GM12878 (cell line): ENCODE measurements at regions of chr12 and their contacts with region 1.

Region 1: GRCh38 chr12:122123051-122123760 is 44.6 kb downstream of the MLXIP start:
- DNase-seq: no peak
- ATAC-seq: peak; percentile 82
- H3K4me3 ChIP-seq: no peak overlapping the region
- H3K27ac ChIP-seq: no peak overlapping the region
- H3K4me1 ChIP-seq: no peaks in the 10 kb centered on the region; the same call in 1 of the 2 replicates
- H3K27me3 ChIP-seq: no peaks in the 10 kb centered on the region
- CTCF ChIP-seq: peak; percentile 59 to 81 (median 66)
- EP300 ChIP-seq: no peak
- POLR2A ChIP-seq: no peak
- RAD21 ChIP-seq: peak; percentile 87

Region 2: GRCh38 chr12:121917979-121918678 is 205.1 kb before region 1 on chr12 and contains the start of gene CFAP251:
- CTCF ChIA-PET with region 1: interaction called, 13 read pairs
- POLR2A ChIA-PET with region 1: no interaction called
- RAD21 ChIA-PET with region 1: interaction called, 11 read pairs
- SMC1A ChIA-PET with region 1: interaction called, 6 read pairs
- in situ Hi-C with region 1: no loop called
- intact Hi-C with region 1: loop called (anchors 5 kb)
- DNase-seq: peak; percentile 50
- ATAC-seq: peak; percentile 100
- H3K4me3 ChIP-seq: peak within 1 kb of the TSS; percentile 57
- H3K27ac ChIP-seq: peak within 1 kb of the TSS; percentile 13; the same call in 1 of the 2 replicates
- H3K4me1 ChIP-seq: peaks cover 8% of the 10 kb centered on the region; the same call in 1 of the 2 replicates
- H3K27me3 ChIP-seq: no peaks in the 10 kb centered on the region
- CTCF ChIP-seq: peak; percentile 60 to 79 (median 73)
- EP300 ChIP-seq: no peak; a peak in 1 of 4 replicates
- POLR2A ChIP-seq: peak; percentile 67
- RAD21 ChIP-seq: peak; percentile 48
- polyA plus RNA-seq, gene CFAP251: 0.27 to 0.42 TPM

Region 3: GRCh38 chr12:122051231-122051876 is 71.9 kb before region 1 on chr12:
- CTCF ChIA-PET with region 1: interaction called, 86 read pairs
- POLR2A ChIA-PET with region 1: no interaction called
- RAD21 ChIA-PET with region 1: interaction called, 32 read pairs
- SMC1A ChIA-PET with region 1: interaction called, 33 read pairs
- in situ Hi-C with region 1: loop called (anchors 5 kb)
- intact Hi-C with region 1: loop called (anchors 1 kb)
- DNase-seq: no peak
- ATAC-seq: no peak
- H3K4me3 ChIP-seq: no peak overlapping the region
- H3K27ac ChIP-seq: no peak overlapping the region
- H3K4me1 ChIP-seq: no peaks in the 10 kb centered on the region
- H3K27me3 ChIP-seq: no peaks in the 10 kb centered on the region
- CTCF ChIP-seq: no peak
- EP300 ChIP-seq: no peak
- POLR2A ChIP-seq: no peak
- RAD21 ChIP-seq: no peak

Region 4: DNA sequence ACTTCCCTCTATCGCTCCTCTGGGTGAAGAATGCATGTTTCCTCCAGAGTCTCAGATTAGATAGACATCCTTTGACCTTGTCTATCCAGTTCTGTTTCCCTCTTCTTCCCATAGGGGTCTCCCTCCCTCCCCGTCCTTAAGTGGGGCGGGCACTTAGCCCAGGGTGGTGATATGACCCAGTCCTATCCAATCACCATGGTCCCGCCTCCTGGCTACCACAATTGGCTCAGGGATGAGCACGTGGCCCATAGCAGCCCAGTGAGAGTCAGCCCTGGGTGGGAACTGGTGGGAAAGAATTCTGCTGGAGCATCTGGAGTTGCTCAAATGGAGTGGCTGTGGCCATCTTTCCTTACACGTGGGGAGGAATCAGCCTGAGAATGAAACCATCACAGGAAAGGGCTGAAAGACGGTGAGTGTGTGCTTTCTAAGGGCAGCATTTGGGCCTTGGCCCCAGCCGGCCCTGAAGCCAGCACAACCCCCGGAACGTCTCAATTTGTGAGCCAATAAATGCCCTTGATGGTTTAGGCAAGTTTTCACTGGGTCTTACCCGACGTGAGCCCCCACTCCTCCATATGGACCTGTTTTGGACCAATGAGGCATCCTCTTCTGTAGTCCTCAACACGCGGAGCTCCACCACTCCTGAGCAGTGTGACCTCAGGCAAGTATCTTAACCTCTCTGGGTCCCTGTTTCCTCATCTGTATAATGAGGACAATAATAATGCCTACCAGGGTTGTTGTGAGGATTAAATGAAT is 59.0 kb before region 1 on chr12:
- CTCF ChIA-PET with region 1: interaction called, 15 read pairs
- POLR2A ChIA-PET with region 1: no interaction called
- RAD21 ChIA-PET with region 1: interaction called, 5 read pairs
- SMC1A ChIA-PET with region 1: interaction called, 3 read pairs
- in situ Hi-C with region 1: loop called (anchors 5 kb)
- intact Hi-C with region 1: loop called (anchors 2 kb)
- DNase-seq: peak; percentile 50
- ATAC-seq: peak; percentile 98
- H3K4me3 ChIP-seq: peak overlapping the region; percentile 52; the same call in 1 of the 2 replicates
- H3K27ac ChIP-seq: no peak overlapping the region
- H3K4me1 ChIP-seq: peaks cover 15% of the 10 kb centered on the region
- H3K27me3 ChIP-seq: no peaks in the 10 kb centered on the region
- CTCF ChIP-seq: peak; percentile 31 to 51 (median 47)
- EP300 ChIP-seq: no peak
- POLR2A ChIP-seq: 0 out of 2 replicates have a peak, but pooled peaks have one; percentile 21
- RAD21 ChIP-seq: peak; percentile 44; the same call in 1 of the 2 replicates

Region 5: DNA sequence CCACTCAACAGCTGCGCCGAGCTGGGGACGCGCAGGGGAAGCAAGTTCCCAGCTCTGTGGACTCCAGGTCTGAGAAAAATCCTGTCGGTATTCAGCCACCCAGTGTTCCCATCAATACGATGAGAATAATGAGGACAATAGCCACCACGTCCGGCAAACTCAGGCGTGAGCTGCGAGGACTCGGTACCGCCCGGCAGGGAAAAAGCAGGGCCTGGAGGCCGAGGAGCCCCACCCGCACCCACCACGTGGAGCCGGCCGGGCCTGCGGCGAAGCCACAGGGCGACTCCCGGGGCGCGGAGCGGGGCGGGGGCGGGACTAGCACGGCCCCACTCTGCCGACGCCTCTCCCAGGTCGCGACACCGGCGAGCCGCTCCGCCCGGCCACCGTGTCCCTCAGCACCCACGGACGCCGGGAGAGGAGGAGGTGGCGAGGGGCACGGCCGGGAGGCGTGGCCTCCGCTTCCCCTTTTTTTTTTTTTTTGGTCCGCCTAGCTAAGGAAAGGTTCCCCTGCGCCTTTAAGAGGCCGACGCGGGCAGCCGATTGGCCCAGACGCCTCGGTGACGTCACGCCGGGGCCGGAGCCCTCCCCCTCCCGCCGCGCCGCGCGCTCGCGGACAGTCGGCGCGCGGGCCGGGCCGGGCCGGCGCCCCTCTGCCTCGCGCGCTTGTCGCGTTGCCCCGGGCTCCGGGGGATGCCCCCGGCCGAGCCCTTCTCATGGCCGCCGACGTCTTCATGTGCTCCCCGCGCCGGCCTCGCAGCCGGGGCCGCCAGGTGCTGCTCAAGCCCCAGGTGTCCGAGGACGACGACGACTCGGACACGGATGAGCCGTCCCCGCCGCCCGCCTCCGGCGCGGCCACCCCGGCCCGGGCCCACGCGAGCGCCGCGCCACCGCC is 44.8 kb before region 1 on chr12 and contains the start of gene MLXIP:
- CTCF ChIA-PET with region 1: interaction called, 28 read pairs
- POLR2A ChIA-PET with region 1: no interaction called
- RAD21 ChIA-PET with region 1: interaction called, 4 read pairs
- SMC1A ChIA-PET with region 1: interaction called, 6 read pairs
- in situ Hi-C with region 1: no loop called
- intact Hi-C with region 1: no loop called
- DNase-seq: no peak
- ATAC-seq: peak; percentile 81
- H3K4me3 ChIP-seq: peak within 1 kb of the TSS; percentile 69
- H3K27ac ChIP-seq: no peak within 1 kb of the TSS; the same call in 1 of the 2 replicates
- H3K4me1 ChIP-seq: peaks cover 41% of the 10 kb centered on the region
- H3K27me3 ChIP-seq: no peaks in the 10 kb centered on the region
- CTCF ChIP-seq: 0 out of 6 replicates have a peak, but pooled peaks of 1 of the 3 experiments have one; percentile 1
- EP300 ChIP-seq: no peak
- POLR2A ChIP-seq: peak; percentile 83
- RAD21 ChIP-seq: no peak
- polyA plus RNA-seq, gene MLXIP: 1.1 to 1.2 TPM

Region 6: DNA sequence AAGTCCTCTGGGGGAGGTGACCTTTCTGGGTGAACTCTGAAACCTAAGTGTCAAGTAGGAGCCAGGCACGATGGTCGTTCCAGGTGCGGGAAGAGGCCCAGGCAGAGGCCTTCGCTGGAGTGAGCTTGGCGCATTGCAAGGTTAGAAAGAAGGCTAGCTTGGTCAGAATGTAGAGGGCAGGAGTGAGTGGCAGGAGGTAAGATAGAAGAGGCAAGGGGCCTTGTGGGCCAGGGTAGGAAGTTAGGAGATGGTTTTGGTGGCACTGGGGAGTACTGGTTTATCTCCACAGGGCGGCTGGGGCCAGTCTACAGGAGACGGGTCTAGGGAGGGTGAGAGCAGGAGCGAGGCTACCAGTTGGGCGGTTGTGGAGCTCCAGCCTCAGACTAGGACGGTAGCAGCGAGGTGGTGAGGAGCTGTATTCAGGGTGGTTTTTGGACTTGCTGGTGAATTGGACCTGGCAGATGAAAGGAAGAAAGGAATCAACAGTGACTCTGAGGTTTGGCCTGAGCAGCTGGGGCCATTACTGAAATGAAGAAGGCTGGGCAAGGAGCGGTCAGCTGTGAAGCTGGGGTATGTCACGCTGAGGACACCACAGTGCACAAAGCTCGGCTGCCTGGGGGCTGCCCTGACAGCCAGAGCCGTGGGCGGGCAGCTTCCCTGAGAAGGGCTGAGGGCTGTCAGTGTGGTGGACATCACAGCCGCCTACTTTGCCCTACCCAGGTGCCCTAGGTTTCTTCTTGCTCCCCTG is 35.6 kb before region 1 on chr12:
- CTCF ChIA-PET with region 1: interaction called, 28 read pairs
- POLR2A ChIA-PET with region 1: no interaction called
- RAD21 ChIA-PET with region 1: interaction called, 4 read pairs
- SMC1A ChIA-PET with region 1: interaction called, 7 read pairs
- in situ Hi-C with region 1: no loop called
- intact Hi-C with region 1: no loop called
- DNase-seq: no peak
- ATAC-seq: no peak
- H3K4me3 ChIP-seq: no peak overlapping the region
- H3K27ac ChIP-seq: no peak overlapping the region
- H3K4me1 ChIP-seq: peaks cover 8% of the 10 kb centered on the region
- H3K27me3 ChIP-seq: no peaks in the 10 kb centered on the region
- CTCF ChIP-seq: no peak
- EP300 ChIP-seq: no peak
- POLR2A ChIP-seq: no peak
- RAD21 ChIP-seq: no peak

Region 7: DNA sequence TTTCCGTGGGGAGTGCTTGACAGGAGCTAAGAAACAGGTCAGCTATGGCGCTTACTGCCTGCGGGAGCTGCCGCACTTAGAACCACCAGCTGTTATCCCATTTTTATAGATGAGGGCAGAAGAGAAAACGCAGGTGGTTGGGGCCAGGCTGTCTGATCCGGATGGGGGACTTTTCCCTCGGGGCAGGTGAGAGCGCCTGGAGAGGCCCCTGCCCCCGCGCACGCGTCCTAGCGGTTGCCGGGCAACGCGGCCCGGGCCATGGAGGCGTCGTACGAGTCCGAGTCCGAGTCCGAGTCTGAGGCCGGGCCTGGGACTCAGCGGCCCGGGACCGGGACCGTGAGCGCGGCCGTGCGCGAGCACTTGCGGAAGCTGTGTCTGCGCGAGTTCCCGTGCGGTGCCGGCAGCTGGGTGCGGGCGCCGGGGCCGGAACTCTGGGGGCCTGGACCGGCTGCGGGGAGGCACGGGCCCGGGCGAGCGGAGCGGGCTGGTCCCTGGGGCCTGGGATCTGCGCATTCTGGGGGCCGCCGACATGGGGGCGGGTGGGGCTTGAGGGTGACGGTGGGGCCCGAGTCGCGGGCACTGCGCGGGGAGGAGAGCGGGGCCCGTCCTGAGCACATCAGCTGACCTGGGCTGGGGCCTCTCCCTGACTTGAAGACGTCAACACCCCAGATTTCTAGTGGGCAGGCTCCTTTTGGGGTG is 59.8 kb after region 1 on chr12 and contains the start of gene LRRC43:
- CTCF ChIA-PET with region 1: no interaction called
- POLR2A ChIA-PET with region 1: no interaction called
- RAD21 ChIA-PET with region 1: no interaction called
- SMC1A ChIA-PET with region 1: no interaction called
- in situ Hi-C with region 1: no loop called
- intact Hi-C with region 1: no loop called
- DNase-seq: no peak
- ATAC-seq: peak; percentile 79
- H3K4me3 ChIP-seq: peak within 1 kb of the TSS; percentile 50; the same call in 1 of the 2 replicates
- H3K27ac ChIP-seq: no peak within 1 kb of the TSS
- H3K4me1 ChIP-seq: peaks cover 7% of the 10 kb centered on the region
- H3K27me3 ChIP-seq: no peaks in the 10 kb centered on the region; a peak in 1 of 4 replicates
- CTCF ChIP-seq: no peak
- EP300 ChIP-seq: no peak
- POLR2A ChIP-seq: no peak
- RAD21 ChIP-seq: no peak
- polyA plus RNA-seq, gene LRRC43: not detected